ENCODE measurements at regions of chr16 and their contacts with region 1.

Region 1: GRCh38 chr16:88405216-88406060 is 22.7 kb downstream of the ZNF469 start:
- DNase-seq: no peak
- H3K4me3 ChIP-seq: no peak overlapping the region
- H3K27ac ChIP-seq: no peak overlapping the region
- H3K4me1 ChIP-seq: peaks cover 3% of the 10 kb centered on the region
- H3K27me3 ChIP-seq: no peaks in the 10 kb centered on the region
- CTCF ChIP-seq: no peak

Region 2: DNA sequence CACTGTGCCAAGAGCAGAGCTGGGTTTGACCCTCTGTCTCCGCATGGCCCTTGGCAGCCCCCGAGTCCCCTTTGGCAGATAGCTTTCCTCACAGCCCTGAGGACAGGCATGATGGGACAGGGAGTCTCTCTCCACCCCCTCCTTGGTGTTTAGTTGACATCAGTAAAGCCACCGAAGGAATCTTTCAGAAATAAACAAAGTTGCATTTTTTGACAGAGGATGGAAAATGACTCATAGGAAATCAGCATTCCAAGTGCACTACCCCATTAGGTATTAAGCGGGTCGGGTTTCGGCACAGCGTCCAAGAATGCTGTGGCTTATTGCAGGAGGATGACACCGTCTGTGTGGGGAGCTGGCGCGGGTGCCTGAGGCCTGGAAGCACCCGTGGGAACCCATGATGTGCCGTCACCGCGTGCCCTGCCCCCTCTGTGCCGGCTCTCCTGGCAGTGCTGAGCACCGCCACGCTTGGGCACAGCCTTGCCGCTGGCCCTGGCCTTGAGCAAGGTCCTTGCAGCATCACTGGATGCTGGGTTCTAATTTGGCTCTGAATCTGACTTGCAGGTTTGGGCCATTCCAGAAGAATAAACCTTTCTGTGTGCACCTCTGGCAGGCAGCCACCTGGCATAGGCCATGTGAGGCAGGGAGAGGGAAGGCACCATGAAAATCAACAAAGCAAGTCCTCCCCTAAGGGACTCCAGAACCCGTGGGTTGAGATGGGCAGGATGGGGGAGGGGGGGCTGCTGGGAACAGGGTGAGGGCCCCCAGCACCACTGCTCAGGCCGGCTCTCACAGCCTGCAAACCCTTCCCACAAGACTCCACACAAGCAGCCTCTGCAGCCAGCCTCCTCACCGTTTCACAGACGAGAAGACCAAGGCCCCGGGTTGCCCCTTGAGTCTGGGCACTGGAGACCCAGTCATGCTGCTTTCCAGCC is 73.2 kb before region 1 on chr16:
- CTCF ChIA-PET with region 1: no interaction called
- dilution Hi-C with region 1: loop called (anchors 5 kb)
- in situ Hi-C with region 1: no loop called
- intact Hi-C with region 1: no loop called
- DNase-seq: peak; percentile 98
- H3K4me3 ChIP-seq: no peak overlapping the region
- H3K27ac ChIP-seq: peak overlapping the region; percentile 76
- H3K4me1 ChIP-seq: peaks cover 28% of the 10 kb centered on the region
- H3K27me3 ChIP-seq: no peaks in the 10 kb centered on the region
- CTCF ChIP-seq: no peak

Region 3: GRCh38 chr16:88357306-88358022 is 48.0 kb before region 1 on chr16:
- CTCF ChIA-PET with region 1: no interaction called
- dilution Hi-C with region 1: loop called (anchors 5 kb)
- in situ Hi-C with region 1: no loop called
- intact Hi-C with region 1: no loop called
- DNase-seq: no peak
- H3K4me3 ChIP-seq: no peak overlapping the region
- H3K27ac ChIP-seq: no peak overlapping the region
- H3K4me1 ChIP-seq: no peaks in the 10 kb centered on the region
- H3K27me3 ChIP-seq: no peaks in the 10 kb centered on the region
- CTCF ChIP-seq: no peak

Region 4: GRCh38 chr16:88383401-88384221 is 21.8 kb before region 1 on chr16:
- CTCF ChIA-PET with region 1: no interaction called
- dilution Hi-C with region 1: no loop called
- in situ Hi-C with region 1: no loop called
- intact Hi-C with region 1: loop called (anchors 1 kb)
- DNase-seq: no peak
- H3K4me3 ChIP-seq: peak overlapping the region in 2 of 3 experiments; percentile 26 to 33
- H3K27ac ChIP-seq: no peak overlapping the region
- H3K4me1 ChIP-seq: peaks cover 7% of the 10 kb centered on the region
- H3K27me3 ChIP-seq: peaks cover 4% of the 10 kb centered on the region
- CTCF ChIP-seq: peak in 1 of 2 donors; percentile 57

Region 5: DNA sequence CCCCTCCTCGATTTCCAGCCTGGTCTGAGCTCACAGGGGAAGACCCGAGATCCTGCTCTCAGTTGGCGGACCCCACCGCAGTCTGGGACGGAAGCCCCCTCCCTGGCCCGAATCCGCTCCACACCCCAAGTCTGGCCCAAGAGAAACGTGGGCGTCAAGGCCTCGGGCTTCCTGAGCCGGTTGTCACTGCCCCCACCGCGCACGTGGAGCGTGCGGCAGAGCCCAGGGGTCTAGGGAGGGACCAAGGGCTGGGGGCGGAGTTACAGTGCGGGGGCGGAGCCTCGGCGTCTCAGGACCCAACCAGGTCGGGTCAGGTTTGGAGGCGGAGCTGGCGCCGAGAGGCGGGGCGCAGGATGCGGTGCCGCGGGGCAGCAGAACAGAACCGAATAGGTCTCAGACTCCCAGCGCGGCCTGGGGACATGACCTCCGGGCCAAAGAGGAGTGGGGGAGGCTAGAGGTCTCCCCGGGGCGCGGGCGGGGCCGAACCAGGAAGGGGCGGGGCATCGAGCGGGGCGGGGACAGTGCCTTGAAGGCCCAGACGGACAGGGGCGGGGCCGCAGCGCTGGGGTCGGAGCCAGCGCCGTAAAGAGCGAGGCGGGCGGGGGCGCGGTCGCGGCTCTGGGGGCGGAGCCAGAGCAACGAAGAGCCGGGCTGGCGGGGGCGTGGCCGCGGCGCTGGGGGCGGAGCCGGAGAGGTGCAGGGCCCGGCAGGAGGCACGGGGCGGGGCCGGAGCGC is 47.2 kb after region 1 on chr16:
- CTCF ChIA-PET with region 1: no interaction called
- dilution Hi-C with region 1: loop called (anchors 5 kb)
- in situ Hi-C with region 1: no loop called
- intact Hi-C with region 1: no loop called
- DNase-seq: peak; percentile 92
- H3K4me3 ChIP-seq: peak overlapping the region; percentile 56 to 84 (median 60)
- H3K27ac ChIP-seq: no peak overlapping the region
- H3K4me1 ChIP-seq: peaks cover 30% of the 10 kb centered on the region
- H3K27me3 ChIP-seq: no peaks in the 10 kb centered on the region
- CTCF ChIP-seq: no peak

Region 6: GRCh38 chr16:88497561-88498462 is 92.4 kb after region 1 on chr16:
- CTCF ChIA-PET with region 1: no interaction called
- dilution Hi-C with region 1: no loop called
- in situ Hi-C with region 1: no loop called
- intact Hi-C with region 1: no loop called
- DNase-seq: no peak
- H3K4me3 ChIP-seq: no peak overlapping the region
- H3K27ac ChIP-seq: no peak overlapping the region
- H3K4me1 ChIP-seq: no peaks in the 10 kb centered on the region
- H3K27me3 ChIP-seq: no peaks in the 10 kb centered on the region
- CTCF ChIP-seq: no peak

Region 7: GRCh38 chr16:88838991-88839529 is 433.6 kb after region 1 on chr16:
- CTCF ChIA-PET with region 1: no interaction called
- dilution Hi-C with region 1: no loop called
- in situ Hi-C with region 1: no loop called
- intact Hi-C with region 1: no loop called
- DNase-seq: no peak
- H3K4me3 ChIP-seq: no peak overlapping the region
- H3K27ac ChIP-seq: no peak overlapping the region
- H3K4me1 ChIP-seq: no peaks in the 10 kb centered on the region
- H3K27me3 ChIP-seq: no peaks in the 10 kb centered on the region
- CTCF ChIP-seq: no peak

Measured in mammary epithelial cell (primary cell).